Sigmoid colon (tissue), 7 donors: ENCODE measurements at regions of chr3 and their contacts with region 1.

Region 1: GRCh38 chr3:169966428-169966950 is at the start of gene SEC62:
- DNase-seq: peak; percentile 97
- H3K4me3 ChIP-seq: peak within 1 kb of the TSS; percentile 84 to 96 (median 90)
- H3K27ac ChIP-seq: peak within 1 kb of the TSS; percentile 95 to 99 (median 98)
- H3K4me1 ChIP-seq: peaks cover 0 to 48% (median 32%) of the 10 kb centered on the region in 4 donors
- H3K27me3 ChIP-seq: no peaks in the 10 kb centered on the region
- CTCF ChIP-seq: peak; percentile 10 to 53 (median 24)
- EP300 ChIP-seq: peak in 1 of 4 donors; percentile 24
- POLR2A ChIP-seq: peak; percentile 59 to 68
- total RNA-seq, gene SEC62: 77.7 to 82.6 (median 79.8) TPM

Region 2: GRCh38 chr3:169764452-169765274 is 201.8 kb before region 1 on chr3 and contains the start of gene TERC:
- intact Hi-C with region 1: loop called (anchors 2 kb)
- DNase-seq: peak; percentile 98
- H3K4me3 ChIP-seq: peak within 1 kb of the TSS; percentile 69 to 74 (median 72)
- H3K27ac ChIP-seq: peak within 1 kb of the TSS; percentile 93 to 95 (median 94)
- H3K4me1 ChIP-seq: peaks cover 0 to 14% (median 4%) of the 10 kb centered on the region in 4 donors
- H3K27me3 ChIP-seq: no peaks in the 10 kb centered on the region
- CTCF ChIP-seq: no peak
- EP300 ChIP-seq: peak in 1 of 4 donors; percentile 11
- POLR2A ChIP-seq: peak; percentile 99
- total RNA-seq, gene TERC: 65.3 to 220 (median 125) TPM

Region 3: DNA sequence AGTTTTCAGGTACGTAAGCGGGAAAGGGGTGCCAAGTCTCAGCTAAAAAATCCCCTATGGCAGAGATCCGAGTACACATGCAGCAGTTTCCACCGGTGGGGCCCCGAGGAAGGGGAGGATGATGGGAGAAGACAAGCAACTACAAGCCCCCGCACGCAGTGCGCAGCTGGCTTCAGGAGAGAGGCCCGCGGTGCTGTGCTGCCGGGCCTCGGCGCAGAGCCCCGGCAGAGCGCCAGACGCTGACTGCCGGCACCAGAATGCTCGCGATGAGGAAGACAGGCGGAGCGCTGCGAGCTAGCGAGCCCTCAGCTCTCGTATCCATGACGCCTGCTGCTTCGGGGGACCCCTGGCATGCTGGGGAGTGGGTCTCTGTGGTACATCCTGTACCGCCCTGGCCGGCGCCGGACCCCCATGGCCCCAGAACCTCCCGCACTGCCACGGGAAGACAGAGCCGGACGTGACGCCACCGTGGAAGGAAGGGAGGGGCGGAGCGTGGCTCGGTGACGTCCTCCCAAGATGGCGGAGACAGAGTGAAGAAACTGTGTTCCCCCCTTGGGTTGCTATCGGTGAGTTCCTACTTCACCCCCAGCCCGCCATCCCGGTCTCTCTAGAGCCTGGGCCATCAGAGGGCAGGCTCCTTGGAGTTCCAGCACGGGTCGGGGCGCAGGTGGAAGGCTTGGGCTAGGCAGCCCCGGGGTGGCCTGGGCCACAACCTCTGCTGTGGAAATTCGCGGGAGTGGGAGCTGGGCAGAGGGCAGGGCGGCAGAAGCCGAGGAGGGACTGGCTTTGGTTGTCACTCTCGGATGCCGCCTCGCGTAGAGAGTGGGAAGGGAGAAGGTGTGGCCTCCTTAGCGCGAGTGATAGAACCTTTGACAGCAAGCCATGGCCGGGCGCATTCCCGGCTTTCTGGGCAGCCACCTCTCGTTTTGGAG is 193.3 kb before region 1 on chr3 and contains the start of gene MYNN:
- intact Hi-C with region 1: loop called (anchors 2 kb)
- DNase-seq: peak; percentile 96
- H3K4me3 ChIP-seq: peak within 1 kb of the TSS; percentile 68 to 94 (median 87)
- H3K27ac ChIP-seq: peak within 1 kb of the TSS; percentile 91 to 99 (median 98)
- H3K4me1 ChIP-seq: peaks cover 0 to 31% (median 23%) of the 10 kb centered on the region in 4 donors
- H3K27me3 ChIP-seq: no peaks in the 10 kb centered on the region
- CTCF ChIP-seq: no peak
- EP300 ChIP-seq: no peak
- POLR2A ChIP-seq: peak; percentile 99
- total RNA-seq, gene MYNN: 15.5 to 24.4 (median 21.2) TPM

Region 4: GRCh38 chr3:169863458-169863899 is 103.0 kb before region 1 on chr3:
- intact Hi-C with region 1: loop called (anchors 1 kb)
- DNase-seq: peak; percentile 69
- H3K4me3 ChIP-seq: no peak overlapping the region
- H3K27ac ChIP-seq: no peak overlapping the region
- H3K4me1 ChIP-seq: peaks cover 0 to 5% (median 0%) of the 10 kb centered on the region in 4 donors
- H3K27me3 ChIP-seq: no peaks in the 10 kb centered on the region
- CTCF ChIP-seq: peak; percentile 64 to 88 (median 86)
- EP300 ChIP-seq: no peak
- POLR2A ChIP-seq: no peak

Region 5: DNA sequence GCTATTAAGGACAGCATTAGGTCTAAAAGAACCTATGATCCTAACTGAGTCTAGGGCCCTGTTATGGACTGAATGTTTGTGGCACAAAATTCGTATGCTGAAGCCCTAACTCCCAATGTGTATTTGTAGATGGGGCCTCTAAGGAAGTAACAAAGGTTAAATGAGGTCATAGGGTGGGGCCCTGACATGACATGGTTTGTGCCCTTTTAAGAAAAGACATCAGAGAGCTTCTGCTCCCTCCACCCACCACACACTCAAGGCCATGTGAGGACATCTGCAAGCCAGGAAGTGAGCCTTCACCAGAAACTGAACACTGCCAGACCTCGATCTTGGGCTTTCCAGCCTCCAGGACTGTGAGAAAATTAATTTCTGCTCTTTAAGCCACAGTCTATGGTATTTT is 165.8 kb after region 1 on chr3:
- intact Hi-C with region 1: no loop called
- DNase-seq: no peak
- H3K4me3 ChIP-seq: no peak overlapping the region
- H3K27ac ChIP-seq: no peak overlapping the region
- H3K4me1 ChIP-seq: peaks cover 0 to 3% (median 0%) of the 10 kb centered on the region in 4 donors
- H3K27me3 ChIP-seq: no peaks in the 10 kb centered on the region
- CTCF ChIP-seq: no peak
- EP300 ChIP-seq: no peak
- POLR2A ChIP-seq: no peak